ENCODE measurements at regions of chr7 and their contacts with region 1.

Region 1: GRCh38 chr7:5677538-5678294 is 103.7 kb downstream of the RNF216 start:
- DNase-seq: no peak
- ATAC-seq: peak; percentile 41
- H3K4me3 Mint-ChIP-seq: no peak overlapping the region
- H3K27ac Mint-ChIP-seq: peak overlapping the region; percentile 73
- H3K4me1 Mint-ChIP-seq: peaks cover 55% of the 10 kb centered on the region
- H3K27me3 Mint-ChIP-seq: no peaks in the 10 kb centered on the region
- CTCF ChIP-seq: peak; percentile 29

Region 2: DNA sequence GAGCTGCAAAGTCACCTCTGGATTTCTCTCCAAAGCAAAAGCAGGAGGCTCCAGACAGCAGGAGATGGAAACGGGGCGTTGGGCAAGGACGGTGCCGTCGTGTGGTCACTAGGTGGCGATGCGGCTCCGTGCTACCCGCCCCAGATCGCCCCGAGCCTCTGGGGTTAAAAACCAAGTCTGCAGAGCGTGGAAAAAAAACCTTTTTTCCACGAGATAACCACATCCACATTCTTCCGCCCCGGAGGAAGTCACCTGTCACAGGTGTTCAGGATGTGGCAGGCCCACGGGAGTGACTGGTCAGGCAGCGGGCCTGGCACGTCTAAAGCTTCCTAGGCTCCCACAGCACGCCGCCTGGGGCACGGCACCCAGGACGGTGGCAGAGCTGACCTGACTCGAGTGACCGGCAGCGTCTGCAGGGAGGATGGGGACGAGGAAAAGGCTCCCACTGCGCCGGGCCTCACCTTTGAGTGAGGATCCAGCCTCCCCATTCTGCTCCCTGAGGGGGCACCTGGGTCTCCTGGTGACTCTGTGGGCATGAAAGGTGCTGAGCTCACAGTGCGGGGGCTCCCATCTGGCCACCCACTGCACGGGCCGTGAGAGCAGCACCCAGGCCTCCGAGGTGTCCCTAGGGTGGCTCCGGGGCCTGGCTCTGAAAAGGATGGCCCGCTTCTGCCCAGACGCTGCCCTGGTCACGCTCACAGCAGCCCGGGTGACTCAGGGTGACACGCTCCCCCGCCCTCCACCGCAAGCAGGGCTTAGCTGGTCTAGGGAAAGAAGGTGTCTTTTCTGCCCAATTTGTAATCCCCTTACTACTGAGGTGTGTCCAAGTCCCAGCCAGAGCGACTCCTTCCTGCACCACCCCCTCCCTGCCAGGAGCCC is 182.8 kb before region 1 on chr7:
- CTCF ChIA-PET with region 1: interaction called, 63 read pairs
- POLR2A ChIA-PET with region 1: interaction called, 7 read pairs
- intact Hi-C with region 1: loop called (anchors 1 kb)
- DNase-seq: peak; percentile 71
- ATAC-seq: peak; percentile 82
- H3K4me3 Mint-ChIP-seq: peak overlapping the region; percentile 71
- H3K27ac Mint-ChIP-seq: no peak overlapping the region
- H3K4me1 Mint-ChIP-seq: peaks cover 21% of the 10 kb centered on the region
- H3K27me3 Mint-ChIP-seq: no peaks in the 10 kb centered on the region
- CTCF ChIP-seq: peak; percentile 42

Region 3: DNA sequence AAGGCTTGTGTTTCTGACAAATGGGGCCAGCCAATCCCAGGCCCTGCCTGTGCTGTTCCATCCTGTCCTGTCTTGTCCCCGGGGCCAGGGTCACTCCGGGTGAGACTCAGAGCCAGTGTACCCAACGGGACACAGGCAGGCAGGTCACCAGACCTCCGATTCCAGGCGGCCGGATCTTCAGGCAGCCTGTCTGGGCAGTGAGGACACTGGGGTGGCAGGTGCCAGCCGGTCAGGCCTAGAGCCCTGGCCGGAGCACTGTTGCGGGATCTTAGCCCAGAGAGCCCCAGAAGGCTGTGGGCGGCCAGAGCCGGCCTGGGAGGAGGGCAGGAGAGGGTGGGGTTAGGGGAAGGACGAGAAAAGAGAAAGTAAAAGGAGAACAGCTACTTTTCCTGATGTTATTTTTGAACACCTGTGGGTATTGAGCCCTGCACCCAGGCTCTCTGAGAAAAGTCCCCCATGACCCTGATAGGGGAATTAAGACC is 119.8 kb before region 1 on chr7:
- CTCF ChIA-PET with region 1: interaction called, 10 read pairs
- POLR2A ChIA-PET with region 1: interaction called, 10 read pairs
- intact Hi-C with region 1: no loop called
- DNase-seq: peak; percentile 45
- ATAC-seq: peak; percentile 13
- H3K4me3 Mint-ChIP-seq: peak overlapping the region; percentile 87
- H3K27ac Mint-ChIP-seq: peak overlapping the region; percentile 93
- H3K4me1 Mint-ChIP-seq: peaks cover 49% of the 10 kb centered on the region
- H3K27me3 Mint-ChIP-seq: no peaks in the 10 kb centered on the region
- CTCF ChIP-seq: no peak

Region 4: GRCh38 chr7:5665094-5666025 is 12.4 kb before region 1 on chr7:
- CTCF ChIA-PET with region 1: interaction called, 34 read pairs
- POLR2A ChIA-PET with region 1: no interaction called
- intact Hi-C with region 1: no loop called
- DNase-seq: no peak
- ATAC-seq: peak; percentile 71
- H3K4me3 Mint-ChIP-seq: no peak overlapping the region
- H3K27ac Mint-ChIP-seq: no peak overlapping the region
- H3K4me1 Mint-ChIP-seq: peaks cover 28% of the 10 kb centered on the region
- H3K27me3 Mint-ChIP-seq: no peaks in the 10 kb centered on the region
- CTCF ChIP-seq: no peak

Region 5: GRCh38 chr7:5704534-5704922 is 26.8 kb after region 1 on chr7:
- CTCF ChIA-PET with region 1: interaction called, 72 read pairs
- POLR2A ChIA-PET with region 1: interaction called, 21 read pairs
- intact Hi-C with region 1: loop called (anchors 1 kb)
- DNase-seq: peak; percentile 49
- ATAC-seq: peak; percentile 31
- H3K4me3 Mint-ChIP-seq: no peak overlapping the region
- H3K27ac Mint-ChIP-seq: no peak overlapping the region
- H3K4me1 Mint-ChIP-seq: peaks cover 40% of the 10 kb centered on the region
- H3K27me3 Mint-ChIP-seq: no peaks in the 10 kb centered on the region
- CTCF ChIP-seq: peak; percentile 78

Region 6: DNA sequence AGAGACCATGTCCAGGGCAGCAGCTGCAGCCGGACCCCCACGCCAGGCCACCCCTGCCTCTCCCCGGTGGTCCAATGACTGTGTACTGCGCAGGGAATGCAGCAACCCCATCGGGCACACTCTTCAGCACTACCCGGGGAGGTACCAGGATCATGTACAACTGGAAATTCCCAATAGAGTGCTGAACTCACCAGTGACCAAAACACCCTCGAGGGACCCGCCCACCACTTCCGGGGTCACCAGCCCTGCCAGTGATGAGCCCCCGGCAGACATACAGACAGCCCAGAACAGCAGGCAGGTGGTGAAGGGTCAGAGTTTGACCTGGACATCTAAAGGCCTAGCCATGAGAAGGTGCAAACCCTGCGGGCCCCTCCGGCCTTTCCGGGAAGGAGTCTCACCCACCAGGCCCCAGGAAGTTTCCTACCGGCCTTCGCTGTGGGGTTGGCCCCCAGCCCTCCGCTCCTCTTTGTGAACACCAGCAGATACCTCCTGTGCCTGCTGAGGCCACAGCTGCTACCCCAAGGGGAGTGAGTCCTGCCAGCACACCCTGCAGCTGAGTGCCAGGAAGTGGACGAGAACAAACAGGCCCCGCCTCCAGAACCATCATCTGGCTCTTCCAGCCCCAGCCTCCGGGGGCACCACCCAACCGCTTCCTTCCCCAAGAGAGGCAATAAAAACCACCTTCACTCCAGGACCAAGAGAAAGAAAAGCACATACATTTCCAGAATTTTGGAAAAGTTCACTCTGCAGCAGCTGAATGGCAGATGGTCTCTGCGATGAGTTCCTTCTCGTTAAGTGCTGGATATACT is 348.5 kb after region 1 on chr7:
- CTCF ChIA-PET with region 1: no interaction called
- POLR2A ChIA-PET with region 1: no interaction called
- intact Hi-C with region 1: no loop called
- DNase-seq: peak; percentile 44
- ATAC-seq: peak; percentile 98
- H3K4me3 Mint-ChIP-seq: peak overlapping the region; percentile 77
- H3K27ac Mint-ChIP-seq: peak overlapping the region; percentile 91
- H3K4me1 Mint-ChIP-seq: peaks cover 26% of the 10 kb centered on the region
- H3K27me3 Mint-ChIP-seq: no peaks in the 10 kb centered on the region
- CTCF ChIP-seq: no peak

Measured in activated B cell treated with CpG ODN at 0.5 μM for 24 hours (primary cell).